CD8-positive, alpha-beta T cell (primary cell): ENCODE measurements at regions of chr5 and their contacts with region 1.

Region 1: GRCh38 chr5:140718241-140718580 is 18.0 kb downstream of the ZMAT2 start:
- DNase-seq: no peak
- ATAC-seq: no peak
- H3K4me3 ChIP-seq: no peak overlapping the region
- H3K4me3 Mint-ChIP-seq: no peak overlapping the region
- H3K27ac ChIP-seq: no peak overlapping the region
- H3K27ac Mint-ChIP-seq: no peak overlapping the region
- H3K4me1 ChIP-seq: no peaks in the 10 kb centered on the region
- H3K4me1 Mint-ChIP-seq: peaks cover 2% of the 10 kb centered on the region
- H3K27me3 ChIP-seq: no peaks in the 10 kb centered on the region
- H3K27me3 Mint-ChIP-seq: peaks cover 2% of the 10 kb centered on the region
- CTCF ChIP-seq: no peak

Region 2: GRCh38 chr5:140372971-140373487 is 345.2 kb before region 1 on chr5:
- CTCF ChIA-PET with region 1: interaction called, 70 read pairs
- POLR2A ChIA-PET with region 1: no interaction called
- intact Hi-C with region 1: loop called (anchors 1 kb)
- DNase-seq: peak in 7 of 9 experiments; percentile 9 to 64 (median 44)
- ATAC-seq: peak; percentile 81
- H3K4me3 ChIP-seq: no peak overlapping the region
- H3K4me3 Mint-ChIP-seq: no peak overlapping the region
- H3K27ac ChIP-seq: no peak overlapping the region
- H3K27ac Mint-ChIP-seq: no peak overlapping the region
- H3K4me1 ChIP-seq: no peaks in the 10 kb centered on the region
- H3K4me1 Mint-ChIP-seq: peaks cover 2% of the 10 kb centered on the region
- H3K27me3 ChIP-seq: no peaks in the 10 kb centered on the region
- H3K27me3 Mint-ChIP-seq: no peaks in the 10 kb centered on the region
- CTCF ChIP-seq: peak; percentile 75

Region 3: DNA sequence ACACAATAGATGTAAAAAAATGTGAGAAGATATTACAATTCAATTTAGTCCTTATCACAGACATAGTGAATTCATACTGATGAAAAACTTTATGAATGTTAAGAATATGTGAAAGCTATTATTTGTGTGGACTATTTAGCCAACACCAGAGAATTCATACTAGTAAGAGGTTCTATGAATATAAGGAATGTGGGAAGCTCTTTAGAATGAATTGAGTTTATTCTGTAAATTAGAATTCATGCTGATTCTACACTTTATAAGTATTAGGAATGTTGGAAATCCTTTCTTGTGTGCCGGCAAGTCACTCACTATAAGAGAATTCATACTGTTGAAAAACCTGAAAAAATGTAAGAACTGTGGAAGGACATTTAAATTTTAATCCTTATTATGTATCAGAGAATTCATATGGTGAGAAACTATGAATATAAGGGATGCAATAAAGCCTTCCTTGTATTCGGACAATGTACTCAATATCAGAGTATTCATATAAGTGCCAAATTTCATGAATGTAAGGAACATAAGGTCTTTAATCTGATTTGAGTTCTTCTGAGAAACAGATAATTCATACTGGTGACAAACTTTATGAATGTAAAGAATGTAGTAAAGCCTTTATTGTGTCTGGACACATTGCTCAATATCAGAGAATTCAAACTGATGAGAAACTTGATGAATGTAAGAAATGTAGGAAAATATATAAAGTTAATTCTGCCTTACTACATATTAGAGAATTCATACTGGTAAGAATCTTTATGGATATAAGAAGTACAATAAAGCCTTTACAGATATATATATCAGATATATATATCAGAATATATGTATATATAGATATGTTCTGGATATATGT is 46.2 kb after region 1 on chr5:
- CTCF ChIA-PET with region 1: no interaction called
- POLR2A ChIA-PET with region 1: no interaction called
- intact Hi-C with region 1: no loop called
- DNase-seq: no peak
- ATAC-seq: no peak
- H3K4me3 ChIP-seq: no peak overlapping the region
- H3K4me3 Mint-ChIP-seq: no peak overlapping the region
- H3K27ac ChIP-seq: no peak overlapping the region
- H3K27ac Mint-ChIP-seq: no peak overlapping the region
- H3K4me1 ChIP-seq: no peaks in the 10 kb centered on the region
- H3K4me1 Mint-ChIP-seq: no peaks in the 10 kb centered on the region
- H3K27me3 ChIP-seq: no peaks in the 10 kb centered on the region
- H3K27me3 Mint-ChIP-seq: no peaks in the 10 kb centered on the region
- CTCF ChIP-seq: no peak